CD4-positive, alpha-beta T cell (primary cell): ENCODE measurements at regions of chrX and their contacts with region 1.

Region 1: GRCh38 chrX:13087322-13088155 is 43.1 kb upstream of the FAM9C start:
- DNase-seq: peak in 11 of 14 experiments; percentile 34 to 94 (median 61)
- ATAC-seq: peak; percentile 63
- H3K4me3 ChIP-seq: peak overlapping the region; percentile 22
- H3K4me3 Mint-ChIP-seq: peak overlapping the region; percentile 85
- H3K27ac ChIP-seq: peak overlapping the region; percentile 91 to 94
- H3K27ac Mint-ChIP-seq: peak overlapping the region; percentile 95
- H3K4me1 ChIP-seq: peaks cover 72% of the 10 kb centered on the region
- H3K4me1 Mint-ChIP-seq: peaks cover 90% of the 10 kb centered on the region
- H3K27me3 ChIP-seq: no peaks in the 10 kb centered on the region
- H3K27me3 Mint-ChIP-seq: no peaks in the 10 kb centered on the region
- CTCF ChIP-seq: no peak

Region 2: GRCh38 chrX:12771445-12772069 is 316.0 kb before region 1 on chrX:
- CTCF ChIA-PET with region 1: no interaction called
- POLR2A ChIA-PET with region 1: no interaction called
- intact Hi-C with region 1: no loop called
- DNase-seq: peak; percentile 51 to 89 (median 66)
- ATAC-seq: peak; percentile 100
- H3K4me3 ChIP-seq: no peak overlapping the region
- H3K4me3 Mint-ChIP-seq: peak overlapping the region; percentile 48
- H3K27ac ChIP-seq: no peak overlapping the region
- H3K27ac Mint-ChIP-seq: no peak overlapping the region
- H3K4me1 ChIP-seq: peaks cover 6% of the 10 kb centered on the region
- H3K4me1 Mint-ChIP-seq: peaks cover 13% of the 10 kb centered on the region
- H3K27me3 ChIP-seq: peaks cover 0 to 3% of the 10 kb centered on the region in 2 experiments
- H3K27me3 Mint-ChIP-seq: peaks cover 4% of the 10 kb centered on the region
- CTCF ChIP-seq: peak; percentile 61

Region 3: DNA sequence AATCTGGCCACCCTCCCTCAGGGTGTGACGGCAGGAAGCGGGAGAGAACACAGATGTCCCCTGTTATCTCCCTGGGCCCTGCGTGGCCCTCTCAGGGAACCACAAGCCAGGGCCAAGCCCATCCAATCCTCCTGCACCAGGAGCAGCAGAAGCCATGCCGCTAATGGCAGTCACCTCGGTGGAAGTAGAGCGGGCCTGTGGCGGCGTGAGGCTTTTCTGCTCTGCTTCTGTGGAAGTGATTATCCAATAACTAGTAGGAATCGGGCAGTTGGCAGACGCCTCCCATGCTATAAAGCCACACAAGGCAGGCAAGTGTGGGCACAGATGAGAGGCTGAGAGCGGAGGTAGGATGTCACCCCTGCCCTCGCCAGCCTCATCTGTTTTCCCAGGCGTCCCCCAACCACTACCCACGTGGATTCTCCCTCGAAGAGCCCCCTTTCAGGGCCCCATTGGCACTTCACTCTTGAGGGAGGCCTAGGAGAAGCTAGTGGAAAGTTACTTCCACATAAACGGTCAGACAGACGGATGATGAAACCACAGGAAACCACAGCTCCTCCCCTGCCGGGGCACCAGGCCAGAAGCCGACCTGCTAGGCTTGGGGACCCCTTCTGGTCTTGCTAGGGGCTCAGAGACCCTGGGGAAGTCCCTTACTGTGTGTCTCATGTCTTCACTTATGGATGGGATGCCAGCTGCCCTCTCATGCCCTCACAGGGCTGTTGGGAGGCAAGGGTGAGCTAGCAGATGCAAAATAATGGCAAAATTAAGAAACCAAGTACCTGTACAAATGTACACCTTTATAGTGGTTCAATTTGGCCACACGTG is 131.4 kb before region 1 on chrX:
- CTCF ChIA-PET with region 1: interaction called, 27 read pairs
- POLR2A ChIA-PET with region 1: interaction called, 59 read pairs
- intact Hi-C with region 1: no loop called
- DNase-seq: peak in 11 of 14 experiments; percentile 38 to 84 (median 61)
- ATAC-seq: peak; percentile 18
- H3K4me3 ChIP-seq: peak overlapping the region; percentile 47
- H3K4me3 Mint-ChIP-seq: peak overlapping the region; percentile 89
- H3K27ac ChIP-seq: peak overlapping the region; percentile 87 to 89
- H3K27ac Mint-ChIP-seq: peak overlapping the region; percentile 95
- H3K4me1 ChIP-seq: peaks cover 80% of the 10 kb centered on the region
- H3K4me1 Mint-ChIP-seq: peaks cover 87% of the 10 kb centered on the region
- H3K27me3 ChIP-seq: no peaks in the 10 kb centered on the region
- H3K27me3 Mint-ChIP-seq: no peaks in the 10 kb centered on the region
- CTCF ChIP-seq: no peak

Region 4: GRCh38 chrX:13000301-13000811 is 87.2 kb before region 1 on chrX:
- CTCF ChIA-PET with region 1: interaction called, 9 read pairs
- POLR2A ChIA-PET with region 1: interaction called, 102 read pairs
- intact Hi-C with region 1: loop called in 1 of 2 experiments (anchors 2 kb)
- DNase-seq: peak in 7 of 14 experiments; percentile 35 to 76 (median 60)
- ATAC-seq: peak; percentile 47
- H3K4me3 ChIP-seq: peak overlapping the region; percentile 37
- H3K4me3 Mint-ChIP-seq: peak overlapping the region; percentile 89
- H3K27ac ChIP-seq: peak overlapping the region; percentile 72 to 85
- H3K27ac Mint-ChIP-seq: peak overlapping the region; percentile 90
- H3K4me1 ChIP-seq: peaks cover 56% of the 10 kb centered on the region
- H3K4me1 Mint-ChIP-seq: peaks cover 83% of the 10 kb centered on the region
- H3K27me3 ChIP-seq: no peaks in the 10 kb centered on the region
- H3K27me3 Mint-ChIP-seq: no peaks in the 10 kb centered on the region
- CTCF ChIP-seq: no peak

Region 5: DNA sequence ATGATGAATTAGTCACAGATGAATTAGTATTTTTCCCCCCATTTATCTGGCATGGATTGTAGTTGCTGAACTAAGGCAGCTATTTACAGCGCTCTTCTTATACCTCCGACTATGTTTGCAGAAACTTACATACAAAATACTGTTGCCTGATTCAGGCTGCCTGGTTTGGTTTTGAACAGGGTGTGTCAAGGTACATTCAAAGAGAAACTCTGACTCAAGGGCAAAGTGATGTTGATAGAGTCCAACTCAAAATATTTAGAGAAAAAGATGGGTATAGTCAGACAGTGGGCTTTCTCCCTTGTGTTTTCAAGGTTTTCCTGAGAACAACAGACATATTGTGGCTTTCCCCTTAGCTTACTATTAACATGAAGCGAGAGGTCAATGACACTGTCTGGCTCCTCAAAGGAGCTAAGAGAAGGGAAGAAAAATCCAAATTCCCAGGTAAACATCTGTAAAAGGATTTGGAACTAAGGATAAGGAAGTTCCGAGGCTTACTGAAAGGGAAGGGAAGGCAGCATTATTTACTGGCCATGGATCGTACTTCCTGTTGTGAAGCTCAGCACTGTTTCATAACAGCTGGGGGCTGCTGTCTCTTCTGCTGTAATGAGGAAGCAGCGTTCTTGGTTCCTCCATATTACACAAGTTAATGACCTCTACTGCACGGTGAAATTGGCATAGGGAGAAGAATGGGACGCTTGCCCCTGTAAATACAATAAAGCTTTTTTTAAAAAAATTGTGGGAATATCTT is 74.0 kb before region 1 on chrX:
- CTCF ChIA-PET with region 1: interaction called, 9 read pairs
- POLR2A ChIA-PET with region 1: interaction called, 30 read pairs
- intact Hi-C with region 1: no loop called
- DNase-seq: peak in 7 of 14 experiments; percentile 8 to 66 (median 43)
- ATAC-seq: peak; percentile 84
- H3K4me3 ChIP-seq: peak overlapping the region; percentile 9
- H3K4me3 Mint-ChIP-seq: peak overlapping the region; percentile 68
- H3K27ac ChIP-seq: peak overlapping the region; percentile 63 to 66
- H3K27ac Mint-ChIP-seq: peak overlapping the region; percentile 88
- H3K4me1 ChIP-seq: peaks cover 45% of the 10 kb centered on the region
- H3K4me1 Mint-ChIP-seq: peaks cover 76% of the 10 kb centered on the region
- H3K27me3 ChIP-seq: no peaks in the 10 kb centered on the region
- H3K27me3 Mint-ChIP-seq: no peaks in the 10 kb centered on the region
- CTCF ChIP-seq: no peak

Region 6: GRCh38 chrX:13051529-13052172 is 35.9 kb before region 1 on chrX:
- CTCF ChIA-PET with region 1: interaction called, 13 read pairs
- POLR2A ChIA-PET with region 1: interaction called, 239 read pairs
- intact Hi-C with region 1: loop called (anchors 2 kb)
- DNase-seq: peak in 13 of 14 experiments; percentile 30 to 77 (median 55)
- ATAC-seq: peak; percentile 83
- H3K4me3 ChIP-seq: no peak overlapping the region
- H3K4me3 Mint-ChIP-seq: peak overlapping the region; percentile 81
- H3K27ac ChIP-seq: peak overlapping the region; percentile 63 to 78
- H3K27ac Mint-ChIP-seq: peak overlapping the region; percentile 98
- H3K4me1 ChIP-seq: peaks cover 53% of the 10 kb centered on the region
- H3K4me1 Mint-ChIP-seq: peaks cover 82% of the 10 kb centered on the region
- H3K27me3 ChIP-seq: no peaks in the 10 kb centered on the region
- H3K27me3 Mint-ChIP-seq: no peaks in the 10 kb centered on the region
- CTCF ChIP-seq: no peak

Region 7: GRCh38 chrX:13123857-13124345 is 36.4 kb after region 1 on chrX:
- CTCF ChIA-PET with region 1: no interaction called
- POLR2A ChIA-PET with region 1: interaction called, 8 read pairs
- intact Hi-C with region 1: loop called in 1 of 2 experiments (anchors 5 kb)
- DNase-seq: peak in 4 of 14 experiments; percentile 1 to 56 (median 12)
- ATAC-seq: peak; percentile 65
- H3K4me3 ChIP-seq: no peak overlapping the region
- H3K4me3 Mint-ChIP-seq: peak overlapping the region; percentile 69
- H3K27ac ChIP-seq: peak overlapping the region; percentile 13 to 69
- H3K27ac Mint-ChIP-seq: peak overlapping the region; percentile 93
- H3K4me1 ChIP-seq: peaks cover 23% of the 10 kb centered on the region
- H3K4me1 Mint-ChIP-seq: peaks cover 54% of the 10 kb centered on the region
- H3K27me3 ChIP-seq: no peaks in the 10 kb centered on the region
- H3K27me3 Mint-ChIP-seq: no peaks in the 10 kb centered on the region
- CTCF ChIP-seq: no peak

Region 8: GRCh38 chrX:13487731-13488523 is 400.4 kb after region 1 on chrX:
- CTCF ChIA-PET with region 1: interaction called, 32 read pairs
- POLR2A ChIA-PET with region 1: interaction called, 12 read pairs
- intact Hi-C with region 1: loop called (anchors 1 to 2 kb)
- DNase-seq: peak; percentile 2 to 76 (median 22)
- ATAC-seq: peak; percentile 87
- H3K4me3 ChIP-seq: no peak overlapping the region
- H3K4me3 Mint-ChIP-seq: no peak overlapping the region
- H3K27ac ChIP-seq: no peak overlapping the region
- H3K27ac Mint-ChIP-seq: peak overlapping the region; percentile 77
- H3K4me1 ChIP-seq: peaks cover 11% of the 10 kb centered on the region
- H3K4me1 Mint-ChIP-seq: peaks cover 29% of the 10 kb centered on the region
- H3K27me3 ChIP-seq: no peaks in the 10 kb centered on the region
- H3K27me3 Mint-ChIP-seq: no peaks in the 10 kb centered on the region
- CTCF ChIP-seq: peak; percentile 55